Activated CD4-positive, alpha-beta T cell treated with anti-CD3 and anti-CD28 coated beads, Interleukin-2, amount 10 ng/mL, durations not matched to agents 24 days and 14 days (primary cell): ENCODE measurements at regions of chr1 and their contacts with region 1.

Region 1: GRCh38 chr1:243343970-243344937 is 88.4 kb downstream of the SDCCAG8 start:
- DNase-seq: peak; percentile 66
- H3K4me3 Mint-ChIP-seq: no peak overlapping the region
- H3K27ac Mint-ChIP-seq: no peak overlapping the region
- H3K4me1 Mint-ChIP-seq: peaks cover 2% of the 10 kb centered on the region
- H3K27me3 Mint-ChIP-seq: no peaks in the 10 kb centered on the region

Region 2: DNA sequence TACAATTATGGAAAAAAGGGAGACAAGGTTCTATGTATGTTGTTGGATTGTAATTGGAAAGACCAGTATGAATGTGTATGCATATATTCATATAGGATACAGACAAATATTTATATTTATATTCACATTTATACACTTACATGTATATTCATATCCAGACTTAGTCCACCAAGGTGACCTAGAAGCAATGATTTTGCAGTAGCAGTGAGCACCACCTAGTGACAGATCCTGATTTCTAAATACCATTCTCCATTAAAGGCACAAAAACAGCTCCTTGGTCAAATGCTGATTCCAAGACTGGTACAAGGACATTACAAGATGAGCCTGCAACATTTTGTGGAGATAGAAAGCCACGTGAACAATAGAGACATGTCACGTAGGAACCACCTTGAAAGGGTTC is 65.0 kb after region 1 on chr1:
- intact Hi-C with region 1: loop called (anchors 2 kb)
- DNase-seq: peak; percentile 54
- H3K4me3 Mint-ChIP-seq: no peak overlapping the region
- H3K27ac Mint-ChIP-seq: no peak overlapping the region
- H3K4me1 Mint-ChIP-seq: peaks cover 21% of the 10 kb centered on the region
- H3K27me3 Mint-ChIP-seq: no peaks in the 10 kb centered on the region

Region 3: DNA sequence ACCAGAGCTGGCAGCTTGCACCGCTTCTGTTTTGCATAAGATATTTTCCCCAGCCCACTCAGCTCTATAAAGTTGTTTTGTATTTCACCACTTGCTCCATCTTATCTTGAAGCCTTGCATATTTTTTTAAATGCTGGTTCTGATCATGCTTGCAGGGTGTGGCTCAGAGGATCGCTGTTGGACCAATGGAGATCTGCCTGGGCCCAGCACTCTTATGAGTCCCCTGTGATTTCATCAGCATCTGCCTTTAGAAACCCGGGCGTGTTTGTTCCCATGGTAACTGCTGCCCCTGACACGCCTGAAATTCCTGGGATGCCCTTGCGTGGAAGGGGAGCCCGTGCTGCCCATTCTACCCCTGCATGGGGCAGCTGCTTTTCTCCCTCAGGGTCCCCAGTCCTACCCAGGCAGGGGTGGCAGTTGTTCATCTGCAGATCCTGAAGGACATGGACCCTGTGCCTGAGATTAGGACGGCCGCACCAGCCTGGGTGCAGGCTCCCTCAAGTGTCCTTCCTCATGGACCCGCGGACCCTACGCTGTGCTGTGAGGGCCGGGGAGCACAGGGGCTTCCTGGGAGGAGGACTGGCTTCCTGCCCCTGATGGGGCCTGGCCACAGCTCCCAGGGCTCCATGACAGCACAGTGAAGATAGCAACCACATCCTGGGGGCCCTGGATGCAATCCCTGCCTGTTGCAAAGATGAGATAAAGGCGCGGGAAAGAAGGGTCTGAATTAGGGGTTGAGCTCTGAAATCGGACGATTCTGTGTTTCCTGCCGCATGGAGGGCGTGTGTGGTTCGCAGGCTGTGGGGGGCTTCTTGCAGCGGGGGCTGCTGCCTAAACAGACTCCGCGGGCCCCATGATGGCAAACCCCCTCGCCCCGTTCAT is 138.1 kb after region 1 on chr1:
- intact Hi-C with region 1: loop called (anchors 10 kb)
- DNase-seq: no peak
- H3K4me3 Mint-ChIP-seq: peak overlapping the region; percentile 71
- H3K27ac Mint-ChIP-seq: no peak overlapping the region
- H3K4me1 Mint-ChIP-seq: peaks cover 14% of the 10 kb centered on the region
- H3K27me3 Mint-ChIP-seq: peaks cover 5% of the 10 kb centered on the region

Region 4: DNA sequence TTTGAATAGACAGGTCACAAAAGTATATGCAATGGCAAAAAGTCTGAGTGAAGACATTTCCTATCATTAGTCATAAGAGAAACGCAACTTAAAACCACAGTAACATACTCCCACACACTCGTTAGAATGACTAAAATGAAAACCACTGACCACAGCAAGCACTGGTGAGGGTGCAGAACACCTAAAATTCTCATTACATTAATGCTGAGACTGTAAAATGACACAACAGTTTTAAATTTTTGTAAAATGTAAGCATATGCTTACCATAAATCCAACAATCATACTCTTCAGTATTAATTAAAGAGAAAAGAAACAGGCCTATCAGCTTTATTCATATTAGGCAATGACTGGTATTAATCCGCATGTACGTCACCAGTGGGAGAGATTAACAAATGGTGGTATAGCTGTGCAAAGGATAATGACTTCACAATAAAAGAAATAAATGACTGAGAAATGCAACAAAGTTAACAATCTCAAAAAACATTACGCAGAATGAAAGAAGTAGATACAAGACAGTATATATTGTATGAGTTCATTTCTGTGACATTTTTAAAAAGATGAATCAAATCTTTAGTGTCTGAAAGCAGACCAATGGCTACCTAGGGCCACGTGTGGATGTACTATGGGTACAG is 252.3 kb after region 1 on chr1:
- intact Hi-C with region 1: loop called (anchors 5 kb)
- DNase-seq: peak; percentile 81
- H3K4me3 Mint-ChIP-seq: peak overlapping the region; percentile 43
- H3K27ac Mint-ChIP-seq: peak overlapping the region; percentile 87
- H3K4me1 Mint-ChIP-seq: peaks cover 24% of the 10 kb centered on the region
- H3K27me3 Mint-ChIP-seq: no peaks in the 10 kb centered on the region

Region 5: GRCh38 chr1:243748706-243749283 is 404.5 kb after region 1 on chr1:
- intact Hi-C with region 1: loop called (anchors 1 kb)
- DNase-seq: peak; percentile 79
- H3K4me3 Mint-ChIP-seq: no peak overlapping the region
- H3K27ac Mint-ChIP-seq: no peak overlapping the region
- H3K4me1 Mint-ChIP-seq: peaks cover 2% of the 10 kb centered on the region
- H3K27me3 Mint-ChIP-seq: no peaks in the 10 kb centered on the region

Region 6: DNA sequence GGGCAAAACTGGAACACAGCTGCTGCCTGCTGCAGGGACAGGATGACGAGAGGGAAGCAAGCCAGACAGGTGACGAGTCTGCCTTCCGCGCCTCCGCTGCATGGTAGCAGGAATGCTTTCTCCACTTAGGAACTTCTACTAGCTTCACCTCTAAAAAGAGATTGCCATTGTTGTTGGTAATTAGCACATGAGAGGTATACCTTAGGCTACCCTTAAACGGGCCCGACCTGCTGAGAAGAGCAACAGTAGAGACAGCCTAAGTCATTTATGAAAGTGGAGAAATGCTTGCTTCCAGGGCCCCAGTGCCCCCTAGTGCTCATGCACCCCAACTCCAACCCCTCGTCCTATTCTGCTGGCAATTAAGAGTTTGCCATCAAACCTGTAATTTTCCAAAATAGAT is 602.7 kb after region 1 on chr1:
- intact Hi-C with region 1: loop called (anchors 1 kb)
- DNase-seq: peak; percentile 65
- H3K4me3 Mint-ChIP-seq: no peak overlapping the region
- H3K27ac Mint-ChIP-seq: no peak overlapping the region
- H3K4me1 Mint-ChIP-seq: no peaks in the 10 kb centered on the region
- H3K27me3 Mint-ChIP-seq: no peaks in the 10 kb centered on the region

Region 7: DNA sequence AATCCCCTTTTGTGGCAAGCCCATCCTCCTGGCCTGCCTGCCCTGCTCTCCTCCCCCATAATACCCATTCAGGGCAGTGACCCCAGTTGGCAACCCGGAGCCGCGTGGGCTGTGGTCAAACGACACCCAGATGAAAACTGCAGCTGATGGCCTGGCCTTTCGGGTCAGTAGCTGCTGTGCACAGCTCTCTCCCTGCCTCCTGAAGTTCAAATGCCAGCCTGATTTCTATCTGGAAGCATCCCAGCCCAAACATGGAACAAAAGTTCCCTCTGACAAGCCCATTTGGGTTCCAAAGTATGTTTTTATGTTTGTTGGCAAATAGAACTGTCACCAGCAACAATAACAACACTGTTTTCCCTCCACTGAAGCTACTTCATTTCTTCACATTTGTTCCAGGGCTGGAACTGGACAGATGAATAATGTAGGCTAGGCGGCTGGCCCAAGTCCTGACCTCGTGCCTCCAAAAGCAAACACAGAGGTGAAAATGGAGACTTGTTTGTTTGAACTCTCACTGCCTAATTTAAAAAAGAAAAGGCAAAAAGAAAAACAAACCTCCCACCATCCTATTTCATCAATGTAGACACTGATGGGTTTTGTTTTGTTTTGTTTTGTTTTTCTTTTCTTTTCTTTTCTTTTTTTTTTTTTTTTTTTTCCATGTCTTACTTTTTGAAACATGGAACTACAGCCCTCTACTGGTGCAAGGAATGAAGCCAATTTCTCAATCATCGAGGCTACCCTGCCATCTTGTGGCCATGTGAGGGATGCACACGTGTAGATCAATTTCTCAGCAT is 928.4 kb after region 1 on chr1:
- intact Hi-C with region 1: loop called (anchors 1 kb)
- DNase-seq: peak; percentile 91
- H3K4me3 Mint-ChIP-seq: no peak overlapping the region
- H3K27ac Mint-ChIP-seq: no peak overlapping the region
- H3K4me1 Mint-ChIP-seq: peaks cover 9% of the 10 kb centered on the region
- H3K27me3 Mint-ChIP-seq: peaks cover 1% of the 10 kb centered on the region